AG04450 (cell line): ENCODE measurements at regions of chr10 and their contacts with region 1.

Region 1: DNA sequence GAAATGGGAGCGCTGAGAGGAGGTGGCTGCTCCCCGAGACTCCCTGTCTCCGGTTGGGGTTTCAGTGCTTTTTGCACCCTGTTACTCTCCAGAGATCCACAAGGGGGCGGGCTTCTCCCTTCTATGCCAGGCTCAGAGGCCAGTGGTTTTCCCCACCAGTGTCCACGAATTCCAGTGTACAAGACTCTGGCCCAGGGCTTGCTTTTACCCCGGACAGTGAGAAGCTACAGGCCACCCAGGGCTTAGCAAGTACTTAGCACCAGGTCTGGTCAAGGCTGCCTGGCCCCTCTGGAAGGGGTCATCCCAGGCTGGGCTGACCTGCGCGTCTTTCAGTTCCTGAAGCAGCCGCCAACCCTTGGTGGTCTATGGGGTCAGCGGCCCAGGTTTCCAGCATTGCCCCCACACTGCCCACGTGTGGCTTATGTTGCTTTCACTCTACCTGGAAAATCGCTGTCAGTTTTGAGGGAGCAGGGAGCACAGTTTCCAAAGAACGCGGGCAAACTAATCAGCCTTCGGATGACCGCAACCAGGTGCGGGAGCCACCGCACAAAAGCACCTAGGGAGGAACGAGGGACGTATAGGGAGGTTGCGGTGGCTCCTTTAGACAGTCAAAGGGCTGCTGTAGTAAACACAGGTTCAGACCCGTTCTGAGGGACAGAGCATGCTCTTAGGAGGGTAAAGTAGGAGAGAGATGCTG is 6.8 kb downstream of the CYP26A1 start:
- DNase-seq: no peak
- H3K4me3 ChIP-seq: peak overlapping the region; percentile 29; the same call in 1 of the 2 replicates
- H3K27ac ChIP-seq: no peak overlapping the region
- H3K27me3 ChIP-seq: peaks cover 31% of the 10 kb centered on the region
- CTCF ChIP-seq: peak; percentile 86

Region 2: DNA sequence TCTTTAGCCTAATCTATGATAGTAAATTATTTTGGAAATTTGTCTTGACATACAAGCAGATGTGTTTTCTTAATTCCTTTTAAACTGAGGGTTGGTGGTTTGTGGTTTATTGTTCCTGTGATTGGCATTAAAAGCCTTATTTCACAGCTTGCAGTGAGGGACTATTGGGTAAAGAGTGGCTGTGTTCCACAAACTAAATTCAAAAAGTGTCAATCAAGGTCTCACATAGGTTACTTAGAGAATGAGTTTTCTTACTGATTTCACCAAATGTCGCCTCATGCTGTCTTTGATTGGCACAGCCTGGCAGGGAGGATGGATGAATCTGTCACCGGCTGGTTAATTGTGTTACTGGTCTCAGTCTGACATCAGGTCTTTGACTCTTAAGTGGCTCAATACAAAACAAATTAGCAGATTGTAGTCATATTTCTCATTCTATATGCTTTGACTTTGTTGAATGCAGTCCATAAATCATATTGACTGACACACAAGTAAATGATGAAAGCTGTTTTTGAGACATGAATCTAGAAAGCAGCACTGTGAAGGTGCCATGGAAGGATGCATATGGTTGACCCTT is 86.7 kb before region 1 on chr10:
- CTCF ChIA-PET with region 1: interaction called, 10 read pairs
- POLR2A ChIA-PET with region 1: no interaction called
- DNase-seq: no peak
- H3K4me3 ChIP-seq: no peak overlapping the region
- H3K27ac ChIP-seq: no peak overlapping the region
- H3K27me3 ChIP-seq: no peaks in the 10 kb centered on the region
- CTCF ChIP-seq: no peak

Region 3: GRCh38 chr10:93068411-93069244 is 11.9 kb before region 1 on chr10:
- CTCF ChIA-PET with region 1: interaction called, 16 read pairs
- POLR2A ChIA-PET with region 1: no interaction called
- DNase-seq: no peak
- H3K4me3 ChIP-seq: peak overlapping the region; percentile 29
- H3K27ac ChIP-seq: no peak overlapping the region
- H3K27me3 ChIP-seq: peaks cover 92% of the 10 kb centered on the region
- CTCF ChIP-seq: peak; percentile 9; the same call in 1 of the 2 replicates

Region 4: GRCh38 chr10:93288654-93289634 is 208.4 kb after region 1 on chr10:
- CTCF ChIA-PET with region 1: interaction called, 31 read pairs
- POLR2A ChIA-PET with region 1: no interaction called
- DNase-seq: peak; percentile 66
- H3K4me3 ChIP-seq: no peak overlapping the region
- H3K27ac ChIP-seq: peak overlapping the region; percentile 65
- H3K27me3 ChIP-seq: no peaks in the 10 kb centered on the region
- CTCF ChIP-seq: peak; percentile 81

Region 5: GRCh38 chr10:93515071-93516005 is 434.8 kb after region 1 on chr10:
- CTCF ChIA-PET with region 1: interaction called, 39 read pairs
- POLR2A ChIA-PET with region 1: no interaction called
- DNase-seq: no peak
- H3K4me3 ChIP-seq: no peak overlapping the region
- H3K27ac ChIP-seq: no peak overlapping the region
- H3K27me3 ChIP-seq: no peaks in the 10 kb centered on the region
- CTCF ChIP-seq: no peak

Region 6: GRCh38 chr10:94738588-94738987 is 1658.1 kb after region 1 on chr10:
- CTCF ChIA-PET with region 1: no interaction called
- POLR2A ChIA-PET with region 1: no interaction called
- DNase-seq: no peak
- H3K4me3 ChIP-seq: no peak overlapping the region
- H3K27ac ChIP-seq: no peak overlapping the region
- H3K27me3 ChIP-seq: no peaks in the 10 kb centered on the region
- CTCF ChIP-seq: no peak